CD4-positive, alpha-beta memory T cell (primary cell): ENCODE measurements at regions of chr14 and their contacts with region 1.

Region 1: DNA sequence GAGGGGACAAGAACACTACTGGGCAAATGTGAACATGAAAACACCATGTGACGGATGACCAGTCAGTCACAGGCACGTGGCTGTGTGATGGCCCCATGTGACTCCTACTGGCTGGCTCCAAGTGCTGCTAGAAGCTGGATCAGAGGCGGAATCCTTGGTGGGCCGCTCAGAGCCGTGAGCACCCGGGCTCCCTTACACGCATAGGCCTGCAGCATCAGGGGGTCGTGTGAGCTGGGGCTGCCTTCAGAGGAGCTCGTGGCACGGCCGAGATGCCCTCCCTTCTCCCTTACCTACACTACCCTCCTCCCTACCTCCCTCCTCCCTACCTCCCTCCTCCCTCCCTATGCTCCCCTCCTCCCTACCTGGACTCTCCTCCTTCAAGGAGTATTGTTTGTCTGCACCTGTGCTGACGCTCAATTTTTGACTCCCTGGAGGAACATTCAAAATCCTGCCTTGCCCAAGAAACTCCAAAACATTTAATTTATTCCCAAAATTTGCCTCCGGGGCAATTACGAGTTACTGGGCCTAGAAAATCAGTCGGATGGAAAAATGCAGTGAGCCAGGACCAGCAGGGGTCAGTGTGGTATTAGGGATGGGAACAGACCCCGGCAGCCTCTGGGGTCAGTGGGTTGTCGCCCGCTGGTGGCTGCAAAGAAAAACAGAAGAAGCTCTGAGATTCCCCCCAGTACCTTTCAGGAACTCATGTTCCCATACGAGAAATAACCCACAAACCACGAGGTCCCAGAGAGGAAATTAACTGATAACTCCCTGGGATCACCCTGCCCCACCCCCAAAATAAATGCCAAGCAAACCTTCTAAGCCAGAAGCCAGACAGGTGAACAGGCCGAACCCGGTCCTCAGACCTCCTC is 61.2 kb downstream of the C14orf132 start:
- DNase-seq: peak; percentile 56 to 68 (median 62)
- H3K4me3 ChIP-seq: no peak overlapping the region
- H3K4me3 Mint-ChIP-seq: no peak overlapping the region
- H3K27ac ChIP-seq: no peak overlapping the region
- H3K27ac Mint-ChIP-seq: peak overlapping the region in 4 of 7 donors; percentile 19 to 67 (median 52)
- H3K4me1 ChIP-seq: no peaks in the 10 kb centered on the region
- H3K4me1 Mint-ChIP-seq: peaks cover 0 to 6% (median 0%) of the 10 kb centered on the region in 4 donors
- H3K27me3 ChIP-seq: no peaks in the 10 kb centered on the region
- H3K27me3 Mint-ChIP-seq: no peaks in the 10 kb centered on the region

Region 2: DNA sequence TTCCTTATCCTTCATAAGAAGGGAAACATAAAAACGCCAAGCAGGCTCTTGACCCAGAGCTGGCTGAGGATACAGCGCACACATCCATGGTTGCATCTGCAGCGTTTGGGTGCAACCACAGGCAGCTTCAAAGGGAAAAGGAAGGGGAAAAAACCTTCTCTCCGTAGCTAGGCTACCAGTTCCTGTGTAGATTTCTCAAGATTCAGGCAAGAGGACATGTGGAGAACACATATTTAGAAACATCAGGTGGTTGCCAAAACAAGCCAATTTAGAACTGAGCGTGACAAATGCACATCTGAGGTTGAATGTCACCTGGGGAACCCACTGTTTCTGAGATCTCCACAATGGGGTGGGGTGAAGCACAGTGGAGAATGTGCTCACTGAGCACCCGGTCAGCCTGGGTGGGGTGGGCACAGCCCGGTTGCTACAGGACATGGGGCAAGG is 26.0 kb after region 1 on chr14:
- CTCF ChIA-PET with region 1: interaction called, 18 read pairs
- POLR2A ChIA-PET with region 1: no interaction called
- intact Hi-C with region 1: no loop called
- DNase-seq: peak; percentile 74 to 85 (median 80)
- H3K4me3 ChIP-seq: peak overlapping the region; percentile 12 to 13
- H3K4me3 Mint-ChIP-seq: peak overlapping the region; percentile 76 to 94 (median 84)
- H3K27ac ChIP-seq: peak overlapping the region; percentile 62
- H3K27ac Mint-ChIP-seq: peak overlapping the region; percentile 92 to 100 (median 99)
- H3K4me1 ChIP-seq: peaks cover 46% of the 10 kb centered on the region
- H3K4me1 Mint-ChIP-seq: peaks cover 35 to 63% (median 50%) of the 10 kb centered on the region in 4 donors
- H3K27me3 ChIP-seq: no peaks in the 10 kb centered on the region
- H3K27me3 Mint-ChIP-seq: no peaks in the 10 kb centered on the region

Region 3: GRCh38 chr14:96246535-96246839 is 146.1 kb after region 1 on chr14:
- CTCF ChIA-PET with region 1: no interaction called
- POLR2A ChIA-PET with region 1: no interaction called
- intact Hi-C with region 1: no loop called
- DNase-seq: no peak
- H3K4me3 ChIP-seq: no peak overlapping the region
- H3K4me3 Mint-ChIP-seq: no peak overlapping the region
- H3K27ac ChIP-seq: no peak overlapping the region
- H3K27ac Mint-ChIP-seq: no peak overlapping the region
- H3K4me1 ChIP-seq: no peaks in the 10 kb centered on the region
- H3K4me1 Mint-ChIP-seq: no peaks in the 10 kb centered on the region
- H3K27me3 ChIP-seq: no peaks in the 10 kb centered on the region
- H3K27me3 Mint-ChIP-seq: peaks cover 11 to 17% of the 10 kb centered on the region in 2 donors

Region 4: GRCh38 chr14:96275177-96276112 is 175.1 kb after region 1 on chr14:
- CTCF ChIA-PET with region 1: interaction called, 114 read pairs
- POLR2A ChIA-PET with region 1: no interaction called
- intact Hi-C with region 1: no loop called
- DNase-seq: peak; percentile 45 to 59 (median 50)
- H3K4me3 ChIP-seq: no peak overlapping the region
- H3K4me3 Mint-ChIP-seq: no peak overlapping the region
- H3K27ac ChIP-seq: no peak overlapping the region
- H3K27ac Mint-ChIP-seq: no peak overlapping the region
- H3K4me1 ChIP-seq: no peaks in the 10 kb centered on the region
- H3K4me1 Mint-ChIP-seq: peaks cover 0 to 3% (median under 1%) of the 10 kb centered on the region in 4 donors
- H3K27me3 ChIP-seq: no peaks in the 10 kb centered on the region
- H3K27me3 Mint-ChIP-seq: no peaks in the 10 kb centered on the region